ENCODE measurements at regions of chr3 and their contacts with region 1.

Region 1: GRCh38 chr3:112642912-112643506 is 2.1 kb upstream of the CCDC80 start:
- DNase-seq: peak; percentile 86 to 92 (median 88)
- ATAC-seq: peak; percentile 88 to 90
- H3K4me3 ChIP-seq: no peak overlapping the region
- H3K27ac ChIP-seq: no peak overlapping the region
- H3K4me1 ChIP-seq: no peaks in the 10 kb centered on the region
- H3K27me3 ChIP-seq: no peaks in the 10 kb centered on the region

Region 2: DNA sequence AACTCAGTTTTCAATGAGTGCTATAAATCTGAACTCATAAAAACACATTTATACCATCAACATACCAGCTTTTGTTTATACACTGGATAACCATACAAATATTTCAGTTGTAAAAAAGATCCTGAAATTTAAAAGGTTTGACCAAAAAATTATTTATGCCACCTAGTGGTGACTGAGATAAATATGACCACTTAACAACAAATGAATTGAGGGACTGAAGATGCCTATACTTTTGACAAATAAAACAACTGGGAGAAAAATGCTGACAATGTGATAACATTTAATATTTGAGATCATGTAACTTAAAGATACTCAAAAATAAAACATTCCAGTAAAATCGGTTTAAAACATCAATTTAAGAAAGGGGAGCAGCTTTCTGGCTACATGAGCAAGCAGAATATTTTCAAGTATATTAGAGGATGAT is 111.6 kb before region 1 on chr3:
- intact Hi-C with region 1: no loop called
- DNase-seq: no peak
- ATAC-seq: no peak
- H3K4me3 ChIP-seq: no peak overlapping the region
- H3K27ac ChIP-seq: no peak overlapping the region
- H3K4me1 ChIP-seq: no peaks in the 10 kb centered on the region
- H3K27me3 ChIP-seq: no peaks in the 10 kb centered on the region

Region 3: GRCh38 chr3:112587336-112587735 is 55.7 kb before region 1 on chr3:
- intact Hi-C with region 1: no loop called
- DNase-seq: no peak
- ATAC-seq: no peak
- H3K4me3 ChIP-seq: no peak overlapping the region
- H3K27ac ChIP-seq: no peak overlapping the region
- H3K4me1 ChIP-seq: no peaks in the 10 kb centered on the region
- H3K27me3 ChIP-seq: no peaks in the 10 kb centered on the region

Region 4: DNA sequence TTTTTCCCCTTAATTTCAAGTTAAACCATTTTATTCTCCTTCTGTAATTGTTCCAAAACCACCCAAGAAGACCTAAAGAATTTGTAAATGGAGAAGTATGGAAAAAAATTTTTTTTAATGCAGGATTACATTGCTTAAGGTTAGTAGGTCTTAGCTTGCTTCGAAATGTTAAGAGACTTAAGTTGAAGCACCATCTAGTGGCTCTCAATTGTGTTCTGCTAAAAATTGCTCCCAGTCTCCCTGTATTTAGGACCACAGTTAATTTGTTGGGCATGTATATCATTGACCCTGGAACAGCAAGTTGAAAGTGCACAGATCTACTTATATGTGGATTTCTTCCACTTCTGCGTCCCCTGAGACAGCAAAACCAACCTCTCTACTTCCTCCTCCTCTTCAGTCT is 171.3 kb after region 1 on chr3:
- intact Hi-C with region 1: loop called in 3 of 4 experiments (anchors 5 kb)
- DNase-seq: no peak
- ATAC-seq: peak in 1 of 2 donors; percentile 25
- H3K4me3 ChIP-seq: no peak overlapping the region
- H3K27ac ChIP-seq: no peak overlapping the region
- H3K4me1 ChIP-seq: peaks cover 5% of the 10 kb centered on the region
- H3K27me3 ChIP-seq: no peaks in the 10 kb centered on the region

Region 5: DNA sequence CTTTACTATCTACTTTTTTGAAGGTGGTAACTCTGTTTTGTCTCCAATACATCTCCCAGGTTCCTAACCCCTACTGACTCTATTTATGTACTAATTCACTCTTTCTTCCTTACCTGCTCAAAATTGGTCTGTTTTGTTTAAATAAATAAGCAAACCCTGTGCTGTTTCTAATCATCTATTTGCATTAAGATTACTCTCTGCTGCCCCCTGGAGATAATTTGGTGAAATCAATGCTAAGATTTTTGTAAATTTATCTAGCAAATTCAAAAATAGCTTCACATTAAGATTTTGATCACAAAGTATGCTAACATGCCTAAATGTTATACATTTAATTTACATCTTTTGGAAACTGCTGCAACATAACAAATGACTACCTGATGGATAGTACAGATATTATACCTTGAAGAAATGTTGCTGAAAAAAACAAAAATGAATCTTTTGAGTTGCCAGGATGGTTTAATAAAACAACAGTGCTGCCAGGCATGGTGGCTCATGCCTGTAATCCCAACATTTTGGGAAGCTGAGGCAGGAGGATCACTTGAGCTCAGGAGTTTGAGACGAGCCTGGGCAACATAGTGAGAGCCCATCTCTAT is 336.3 kb after region 1 on chr3:
- intact Hi-C with region 1: loop called (anchors 5 to 10 kb)
- DNase-seq: no peak
- ATAC-seq: no peak
- H3K4me3 ChIP-seq: no peak overlapping the region
- H3K27ac ChIP-seq: no peak overlapping the region
- H3K4me1 ChIP-seq: no peaks in the 10 kb centered on the region
- H3K27me3 ChIP-seq: no peaks in the 10 kb centered on the region

Region 6: GRCh38 chr3:112984485-112984884 is 341.5 kb after region 1 on chr3:
- intact Hi-C with region 1: loop called (anchors 5 to 10 kb)
- DNase-seq: no peak
- ATAC-seq: no peak
- H3K4me3 ChIP-seq: no peak overlapping the region
- H3K27ac ChIP-seq: no peak overlapping the region
- H3K4me1 ChIP-seq: peaks cover 2% of the 10 kb centered on the region
- H3K27me3 ChIP-seq: no peaks in the 10 kb centered on the region

Region 7: GRCh38 chr3:113211330-113212149 is 568.5 kb after region 1 on chr3 and contains the start of gene BOC:
- intact Hi-C with region 1: no loop called
- DNase-seq: peak; percentile 44 to 75 (median 75)
- ATAC-seq: peak; percentile 83 to 89
- H3K4me3 ChIP-seq: peak within 1 kb of the TSS; percentile 66
- H3K27ac ChIP-seq: peak within 1 kb of the TSS; percentile 53
- H3K4me1 ChIP-seq: no peaks in the 10 kb centered on the region
- H3K27me3 ChIP-seq: no peaks in the 10 kb centered on the region
- total RNA-seq, gene BOC: 12.9 to 45.3 (median 15.4) TPM